Ovary (tissue), 10 donors: ENCODE measurements at regions of chr1 and their contacts with region 1.

Region 1: DNA sequence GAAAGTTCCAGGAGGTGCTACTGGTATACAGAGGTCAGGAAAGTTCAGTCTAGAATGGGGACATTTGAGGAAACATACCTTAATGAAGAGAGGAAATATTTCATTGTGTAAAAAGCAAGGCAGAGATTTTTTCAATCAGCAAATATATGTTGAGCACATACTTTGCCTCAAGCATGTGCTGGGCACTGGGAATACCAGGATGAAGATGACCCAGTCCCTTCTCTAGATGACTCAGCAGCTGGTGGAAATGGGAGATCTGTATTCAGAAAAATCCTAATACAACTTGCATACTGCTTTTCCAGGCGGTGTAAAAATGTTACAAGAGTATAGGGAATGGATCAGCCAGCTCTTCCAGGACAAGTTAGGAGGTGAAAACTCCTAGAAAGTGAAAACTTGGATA is 229.3 kb downstream of the FGGY start:
- DNase-seq: no peak
- H3K4me3 ChIP-seq: no peak overlapping the region
- H3K27ac ChIP-seq: no peak overlapping the region
- H3K4me1 ChIP-seq: no peaks in the 10 kb centered on the region
- H3K27me3 ChIP-seq: no peaks in the 10 kb centered on the region
- CTCF ChIP-seq: no peak
- EP300 ChIP-seq: no peak
- POLR2A ChIP-seq: no peak

Region 2: DNA sequence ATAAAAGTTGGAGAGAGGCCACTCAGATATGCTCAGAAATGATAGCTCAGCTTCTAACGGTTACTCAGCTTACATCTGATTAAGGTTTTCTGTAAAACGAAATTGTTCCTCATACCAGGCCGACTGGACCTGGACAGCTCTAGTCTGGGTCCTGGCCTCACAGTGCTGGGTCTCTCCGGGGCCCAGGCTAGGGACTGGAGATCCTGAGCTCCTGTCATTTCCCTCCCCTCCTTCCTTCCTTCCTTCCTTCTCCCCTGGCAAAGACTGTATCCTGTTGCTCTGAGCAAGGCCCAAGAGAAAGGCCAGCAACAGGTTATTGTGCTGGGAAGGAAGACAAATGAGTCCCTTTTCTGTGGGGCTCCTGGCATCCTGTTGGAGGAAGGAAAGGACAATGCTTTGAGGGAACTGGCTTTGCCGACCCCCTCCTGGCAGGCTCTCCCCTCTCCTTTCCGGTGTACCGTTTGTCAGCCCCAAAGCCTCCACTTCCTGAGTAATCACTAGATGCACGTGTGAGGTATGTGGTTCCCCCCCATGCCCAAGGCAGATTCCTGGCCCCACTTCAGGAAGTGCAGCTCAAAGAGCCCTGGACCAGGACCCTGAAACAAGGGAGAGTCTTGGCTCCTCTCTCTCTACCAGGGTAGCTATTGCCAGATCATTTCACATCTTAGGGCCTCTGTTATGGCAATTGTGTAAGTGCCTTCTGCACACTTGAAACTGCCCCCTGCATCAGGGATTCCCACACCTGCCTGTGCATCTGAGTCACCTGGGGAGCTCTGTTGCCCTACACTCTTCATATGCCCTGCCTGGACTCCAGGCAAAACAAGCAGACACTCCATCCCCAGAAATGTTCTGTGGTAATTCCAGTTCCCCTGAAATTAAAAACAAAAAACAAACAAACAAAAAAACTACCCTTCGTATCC is 442.0 kb before region 1 on chr1:
- intact Hi-C with region 1: no loop called
- DNase-seq: peak in 1 of 5 donors; percentile 40
- H3K4me3 ChIP-seq: no peak overlapping the region
- H3K27ac ChIP-seq: no peak overlapping the region
- H3K4me1 ChIP-seq: no peaks in the 10 kb centered on the region
- H3K27me3 ChIP-seq: no peaks in the 10 kb centered on the region
- CTCF ChIP-seq: no peak
- EP300 ChIP-seq: no peak
- POLR2A ChIP-seq: no peak

Region 3: GRCh38 chr1:59560807-59561450 is 34.7 kb after region 1 on chr1:
- intact Hi-C with region 1: loop called in 1 of 4 experiments (anchors 5 kb)
- DNase-seq: no peak
- H3K4me3 ChIP-seq: no peak overlapping the region
- H3K27ac ChIP-seq: no peak overlapping the region
- H3K4me1 ChIP-seq: no peaks in the 10 kb centered on the region
- H3K27me3 ChIP-seq: no peaks in the 10 kb centered on the region
- CTCF ChIP-seq: no peak
- EP300 ChIP-seq: no peak
- POLR2A ChIP-seq: no peak

Region 4: DNA sequence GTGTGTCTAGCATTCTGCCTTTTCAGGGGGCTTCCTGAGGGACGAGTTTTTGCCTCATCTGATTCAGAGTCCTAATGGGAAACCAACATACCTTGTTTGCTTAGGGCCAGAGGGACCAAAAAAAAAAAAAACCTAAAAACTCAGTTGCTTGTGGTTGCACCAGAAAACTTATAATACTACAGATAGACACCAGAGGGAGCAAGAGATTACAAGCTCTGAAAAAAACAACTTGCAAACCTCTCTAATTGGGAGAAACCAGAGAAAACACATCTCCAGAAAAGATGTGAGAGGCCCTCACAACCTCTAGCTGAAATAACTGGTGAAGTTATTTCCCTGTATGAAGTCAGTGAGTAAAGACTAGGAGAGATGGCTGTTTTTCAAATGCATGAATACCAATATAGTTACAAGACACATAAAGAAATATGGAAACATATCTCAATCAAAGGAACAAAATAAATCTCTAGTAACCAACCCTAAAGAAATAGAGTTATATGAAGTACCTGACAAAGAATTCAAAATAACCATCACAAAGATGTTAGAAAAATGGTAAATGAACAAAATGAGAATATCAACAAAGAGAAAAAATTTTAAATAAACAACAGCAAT is 1322.4 kb after region 1 on chr1:
- intact Hi-C with region 1: no loop called
- DNase-seq: no peak
- H3K4me3 ChIP-seq: no peak overlapping the region
- H3K27ac ChIP-seq: no peak overlapping the region
- H3K4me1 ChIP-seq: no peaks in the 10 kb centered on the region
- H3K27me3 ChIP-seq: no peaks in the 10 kb centered on the region
- CTCF ChIP-seq: no peak
- EP300 ChIP-seq: no peak
- POLR2A ChIP-seq: no peak